ENCODE measurements at regions of chrX and their contacts with region 1.

Region 1: GRCh38 chrX:40097497-40098263 is at the start of gene BCOR:
- DNase-seq: peak; percentile 56 to 85 (median 64)
- ATAC-seq: peak; percentile 42 to 45
- H3K4me3 Mint-ChIP-seq: peak within 1 kb of the TSS; percentile 83 to 98 (median 92)
- H3K27ac Mint-ChIP-seq: peak within 1 kb of the TSS; percentile 31 to 95 (median 86)
- H3K4me1 Mint-ChIP-seq: peaks cover 9 to 35% (median 25%) of the 10 kb centered on the region in 4 donors
- H3K27me3 Mint-ChIP-seq: no peaks in the 10 kb centered on the region
- polyA plus RNA-seq, gene BCOR: 2.5 to 7.7 (median 6.6) TPM

Region 2: GRCh38 chrX:40013266-40014195 is 84.1 kb before region 1 on chrX:
- POLR2A ChIA-PET with region 1: interaction called, 13 read pairs
- DNase-seq: peak in 2 of 10 donors; percentile 22 to 33
- ATAC-seq: peak; percentile 24 to 43
- H3K4me3 Mint-ChIP-seq: peak overlapping the region; percentile 63 to 86 (median 72)
- H3K27ac Mint-ChIP-seq: peak overlapping the region in 1 of 10 donors; percentile 81
- H3K4me1 Mint-ChIP-seq: peaks cover 12 to 37% (median 30%) of the 10 kb centered on the region in 4 donors
- H3K27me3 Mint-ChIP-seq: peaks cover 0 to 10% (median 3%) of the 10 kb centered on the region in 5 donors

Region 3: DNA sequence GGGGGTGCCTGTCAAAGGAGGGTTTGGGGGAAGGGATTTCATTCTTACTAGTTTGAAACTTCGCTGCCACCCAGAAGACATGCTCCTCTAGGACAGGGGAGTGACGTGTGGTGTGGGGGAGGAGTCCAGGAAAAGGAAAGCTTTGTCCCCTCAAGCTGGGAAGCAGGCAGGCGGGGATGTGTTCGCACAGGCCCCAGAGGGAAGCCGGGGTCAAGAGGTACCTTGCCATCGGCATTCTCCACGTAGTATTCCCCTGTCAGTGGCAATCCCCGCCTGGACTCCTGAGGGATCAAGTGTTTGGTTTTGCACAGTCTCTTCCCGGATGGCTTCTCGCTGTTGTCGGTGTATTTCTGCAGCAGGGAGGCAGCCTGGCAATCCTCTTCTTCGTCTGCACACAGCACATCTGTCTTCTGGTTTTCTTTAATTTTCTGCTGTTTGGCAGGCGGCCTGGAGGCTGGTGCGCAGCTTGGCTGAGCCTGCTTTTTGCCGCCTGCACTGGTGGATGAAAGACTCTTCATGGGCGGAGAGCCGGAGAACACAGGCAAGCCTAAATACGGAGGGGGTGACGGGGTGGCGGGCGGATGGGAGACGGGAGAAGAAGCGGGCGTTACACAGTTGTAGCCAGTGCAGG is 35.0 kb before region 1 on chrX:
- POLR2A ChIA-PET with region 1: interaction called, 19 read pairs
- DNase-seq: no peak
- ATAC-seq: no peak
- H3K4me3 Mint-ChIP-seq: peak overlapping the region in 1 of 10 donors; percentile 41
- H3K27ac Mint-ChIP-seq: peak overlapping the region in 9 of 10 donors; percentile 20 to 97 (median 76)
- H3K4me1 Mint-ChIP-seq: peaks cover 16 to 66% (median 48%) of the 10 kb centered on the region in 4 donors
- H3K27me3 Mint-ChIP-seq: no peaks in the 10 kb centered on the region

Region 4: GRCh38 chrX:40083120-40083978 is 14.3 kb before region 1 on chrX:
- POLR2A ChIA-PET with region 1: interaction called, 21 read pairs
- DNase-seq: no peak
- ATAC-seq: peak; percentile 48 to 57
- H3K4me3 Mint-ChIP-seq: peak overlapping the region; percentile 70 to 86 (median 78)
- H3K27ac Mint-ChIP-seq: peak overlapping the region in 3 of 10 donors; percentile 18 to 79 (median 31)
- H3K4me1 Mint-ChIP-seq: peaks cover 13 to 62% (median 62%) of the 10 kb centered on the region in 4 donors
- H3K27me3 Mint-ChIP-seq: no peaks in the 10 kb centered on the region

Region 5: GRCh38 chrX:40108959-40109287 is 11.2 kb after region 1 on chrX:
- POLR2A ChIA-PET with region 1: interaction called, 55 read pairs
- DNase-seq: peak in 9 of 10 donors; percentile 26 to 76 (median 53)
- ATAC-seq: peak; percentile 50 to 61
- H3K4me3 Mint-ChIP-seq: peak overlapping the region in 7 of 10 donors; percentile 45 to 72 (median 60)
- H3K27ac Mint-ChIP-seq: no peak overlapping the region
- H3K4me1 Mint-ChIP-seq: peaks cover 4 to 19% (median 13%) of the 10 kb centered on the region in 4 donors
- H3K27me3 Mint-ChIP-seq: no peaks in the 10 kb centered on the region

Region 6: GRCh38 chrX:40153335-40154249 is 55.9 kb after region 1 on chrX:
- POLR2A ChIA-PET with region 1: interaction called, 70 read pairs
- DNase-seq: peak in 7 of 10 donors; percentile 53 to 75 (median 56)
- ATAC-seq: peak; percentile 56 to 69
- H3K4me3 Mint-ChIP-seq: peak overlapping the region; percentile 76 to 91 (median 83)
- H3K27ac Mint-ChIP-seq: peak overlapping the region in 6 of 10 donors; percentile 44 to 89 (median 63)
- H3K4me1 Mint-ChIP-seq: peaks cover 4 to 33% (median 9%) of the 10 kb centered on the region in 4 donors
- H3K27me3 Mint-ChIP-seq: no peaks in the 10 kb centered on the region

Region 7: GRCh38 chrX:40169193-40170101 is 71.8 kb after region 1 on chrX:
- POLR2A ChIA-PET with region 1: interaction called, 269 read pairs
- DNase-seq: peak in 9 of 10 donors; percentile 54 to 90 (median 76)
- ATAC-seq: peak; percentile 55 to 68
- H3K4me3 Mint-ChIP-seq: peak overlapping the region; percentile 85 to 94 (median 90)
- H3K27ac Mint-ChIP-seq: peak overlapping the region; percentile 96 to 99 (median 99)
- H3K4me1 Mint-ChIP-seq: peaks cover 16 to 58% (median 50%) of the 10 kb centered on the region in 4 donors
- H3K27me3 Mint-ChIP-seq: no peaks in the 10 kb centered on the region

Measured in naive thymus-derived CD8-positive, alpha-beta T cell (primary cell).